ENCODE measurements at regions of chr17 and their contacts with region 1.

Region 1: DNA sequence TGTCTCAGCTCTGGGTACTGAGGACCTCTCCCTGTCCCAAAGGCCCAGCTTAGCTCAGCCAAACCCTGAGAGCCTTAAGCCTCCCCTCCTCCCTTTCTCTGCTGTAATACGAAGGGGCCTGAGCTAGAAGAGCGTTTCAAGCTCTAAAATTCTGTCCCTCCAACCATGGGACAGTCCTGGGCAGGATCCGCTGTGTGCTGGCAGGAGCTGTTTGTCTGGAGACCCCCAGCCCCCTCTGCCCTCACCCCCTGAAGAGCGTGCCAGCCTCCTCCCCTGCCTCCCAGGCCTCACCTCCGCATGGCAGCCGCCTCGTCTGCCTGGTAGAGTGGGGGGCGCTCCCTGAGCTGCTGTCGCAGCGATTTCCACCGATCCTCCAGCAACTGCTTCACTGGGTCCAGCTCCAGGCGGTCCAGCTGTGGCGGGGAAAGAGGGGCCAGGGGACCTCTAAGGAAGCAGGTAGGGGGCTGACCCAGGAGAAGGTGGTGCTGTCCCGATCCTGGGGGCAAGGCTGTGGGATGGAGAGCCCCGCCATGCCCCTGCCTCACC is 14.7 kb downstream of the UBALD2 start:
- DNase-seq: no peak
- CTCF ChIP-seq: no peak

Region 2: DNA sequence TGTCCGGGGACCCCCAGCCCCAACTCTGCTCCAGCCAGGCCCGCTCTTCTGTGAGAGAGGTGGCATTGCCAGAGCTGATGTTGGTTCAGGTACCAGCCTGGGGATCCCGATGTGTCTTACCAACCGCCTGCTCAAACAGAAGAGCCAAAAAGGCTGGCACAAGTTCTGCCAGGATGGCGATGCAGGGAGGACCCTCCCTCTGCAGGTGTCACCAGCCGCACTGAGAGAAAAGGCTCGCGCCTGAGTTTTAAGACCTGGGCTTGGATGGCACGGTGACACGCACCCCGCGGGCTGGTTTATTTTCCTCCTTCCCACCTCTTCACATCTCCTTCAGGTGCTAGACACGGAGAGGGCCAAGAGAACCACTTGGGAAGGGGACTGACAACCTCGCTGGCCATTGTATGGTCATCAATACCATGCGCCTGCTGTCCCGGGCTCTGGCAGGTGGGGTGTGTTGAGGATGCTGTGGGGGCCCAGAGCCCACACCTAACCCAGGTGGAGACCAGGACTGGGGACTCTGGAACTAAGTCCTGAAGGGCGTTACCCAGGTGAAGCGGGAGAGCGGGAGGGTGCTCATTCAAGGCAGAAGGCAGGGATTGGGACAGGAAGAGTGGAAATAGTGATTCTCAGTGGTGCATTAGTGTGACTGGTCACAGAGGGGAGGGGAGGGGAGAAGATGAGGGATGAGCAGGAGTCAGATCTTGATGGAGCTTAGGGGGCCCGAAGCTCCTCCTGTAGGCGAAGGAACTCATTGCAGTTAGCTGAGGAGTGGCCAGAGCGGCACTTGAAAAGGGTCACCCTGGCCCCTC is 155.0 kb before region 1 on chr17:
- in situ Hi-C with region 1: loop called (anchors 5 kb)
- DNase-seq: peak; percentile 9
- CTCF ChIP-seq: no peak

Measured in GM13977 (cell line).